ENCODE measurements at regions of chr1 and their contacts with region 1.

Region 1: GRCh38 chr1:198699167-198700015 is 60.6 kb downstream of the PTPRC start:
- DNase-seq: peak; percentile 40 to 80 (median 65)
- ATAC-seq: peak; percentile 76 to 81 (median 80)
- H3K4me3 ChIP-seq: no peak overlapping the region
- H3K4me3 Mint-ChIP-seq: peak overlapping the region; percentile 31 to 54 (median 47)
- H3K27ac ChIP-seq: peak overlapping the region; percentile 25
- H3K27ac Mint-ChIP-seq: peak overlapping the region; percentile 87 to 93
- H3K4me1 ChIP-seq: peaks cover 19 to 32% of the 10 kb centered on the region in 2 experiments
- H3K4me1 Mint-ChIP-seq: peaks cover 80 to 91% (median 83%) of the 10 kb centered on the region in 3 donors
- H3K27me3 ChIP-seq: no peaks in the 10 kb centered on the region
- H3K27me3 Mint-ChIP-seq: no peaks in the 10 kb centered on the region

Region 2: GRCh38 chr1:198234520-198235251 is 464.7 kb before region 1 on chr1:
- CTCF ChIA-PET with region 1: no interaction called
- POLR2A ChIA-PET with region 1: no interaction called
- DNase-seq: peak in 1 of 35 experiments; percentile 6
- ATAC-seq: peak in 1 of 4 experiments; percentile 19
- H3K4me3 ChIP-seq: no peak overlapping the region
- H3K4me3 Mint-ChIP-seq: no peak overlapping the region
- H3K27ac ChIP-seq: no peak overlapping the region
- H3K27ac Mint-ChIP-seq: peak overlapping the region in 1 of 2 donors; percentile 10
- H3K4me1 ChIP-seq: peaks cover 0 to 4% of the 10 kb centered on the region in 2 experiments
- H3K4me1 Mint-ChIP-seq: peaks cover 20 to 44% (median 42%) of the 10 kb centered on the region in 3 donors
- H3K27me3 ChIP-seq: no peaks in the 10 kb centered on the region
- H3K27me3 Mint-ChIP-seq: no peaks in the 10 kb centered on the region

Region 3: DNA sequence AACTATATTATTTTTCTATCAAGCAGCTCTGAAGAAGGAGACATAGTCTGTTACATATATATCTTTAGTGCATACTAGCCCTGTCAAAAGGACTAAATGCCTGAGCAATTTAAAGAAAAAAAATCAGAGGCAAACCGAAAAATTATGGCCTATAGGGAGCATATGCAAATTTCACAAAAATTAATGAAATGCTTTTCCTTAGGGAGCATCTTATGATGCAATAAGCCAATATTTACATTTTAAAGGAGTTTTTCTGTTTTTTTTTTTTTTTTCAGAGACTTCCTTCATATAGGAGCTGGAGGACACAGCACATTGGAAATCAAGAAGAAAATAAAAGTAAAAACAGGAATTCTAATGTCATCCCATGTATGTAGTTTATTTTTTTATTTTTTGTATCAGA is 48.4 kb after region 1 on chr1:
- CTCF ChIA-PET with region 1: interaction called in 1 of 2 experiments, 6 read pairs
- POLR2A ChIA-PET with region 1: interaction called, 4 to 10 read pairs
- DNase-seq: no peak
- ATAC-seq: no peak
- H3K4me3 ChIP-seq: no peak overlapping the region
- H3K4me3 Mint-ChIP-seq: no peak overlapping the region
- H3K27ac ChIP-seq: peak overlapping the region; percentile 2
- H3K27ac Mint-ChIP-seq: peak overlapping the region; percentile 46 to 73
- H3K4me1 ChIP-seq: peaks cover 6 to 11% of the 10 kb centered on the region in 2 experiments
- H3K4me1 Mint-ChIP-seq: peaks cover 13 to 23% (median 21%) of the 10 kb centered on the region in 3 donors
- H3K27me3 ChIP-seq: no peaks in the 10 kb centered on the region
- H3K27me3 Mint-ChIP-seq: no peaks in the 10 kb centered on the region

Region 4: GRCh38 chr1:198829944-198830343 is 130.6 kb after region 1 on chr1:
- CTCF ChIA-PET with region 1: no interaction called
- POLR2A ChIA-PET with region 1: no interaction called
- DNase-seq: no peak
- ATAC-seq: no peak
- H3K4me3 ChIP-seq: no peak overlapping the region
- H3K4me3 Mint-ChIP-seq: no peak overlapping the region
- H3K27ac ChIP-seq: no peak overlapping the region
- H3K27ac Mint-ChIP-seq: no peak overlapping the region
- H3K4me1 ChIP-seq: peaks cover 2 to 6% of the 10 kb centered on the region in 2 experiments
- H3K4me1 Mint-ChIP-seq: peaks cover 5 to 15% (median 10%) of the 10 kb centered on the region in 3 donors
- H3K27me3 ChIP-seq: peaks cover 0 to 5% of the 10 kb centered on the region in 2 experiments
- H3K27me3 Mint-ChIP-seq: peaks cover 0 to 2% of the 10 kb centered on the region in 2 donors

Measured in T-cell (primary cell).